ENCODE measurements at regions of chr2 and their contacts with region 1.

Region 1: GRCh38 chr2:135637456-135638087 is 104.1 kb upstream of the UBXN4 start:
- DNase-seq: peak; percentile 7
- ATAC-seq: peak; percentile 85
- H3K4me3 Mint-ChIP-seq: no peak overlapping the region
- H3K27ac Mint-ChIP-seq: peak overlapping the region; percentile 49
- H3K4me1 Mint-ChIP-seq: peaks cover 11% of the 10 kb centered on the region
- H3K27me3 Mint-ChIP-seq: no peaks in the 10 kb centered on the region

Region 2: GRCh38 chr2:135349941-135350340 is 287.6 kb before region 1 on chr2:
- CTCF ChIA-PET with region 1: no interaction called
- POLR2A ChIA-PET with region 1: no interaction called
- intact Hi-C with region 1: no loop called
- DNase-seq: no peak
- ATAC-seq: no peak
- H3K4me3 Mint-ChIP-seq: no peak overlapping the region
- H3K27ac Mint-ChIP-seq: no peak overlapping the region
- H3K4me1 Mint-ChIP-seq: no peaks in the 10 kb centered on the region
- H3K27me3 Mint-ChIP-seq: no peaks in the 10 kb centered on the region

Region 3: DNA sequence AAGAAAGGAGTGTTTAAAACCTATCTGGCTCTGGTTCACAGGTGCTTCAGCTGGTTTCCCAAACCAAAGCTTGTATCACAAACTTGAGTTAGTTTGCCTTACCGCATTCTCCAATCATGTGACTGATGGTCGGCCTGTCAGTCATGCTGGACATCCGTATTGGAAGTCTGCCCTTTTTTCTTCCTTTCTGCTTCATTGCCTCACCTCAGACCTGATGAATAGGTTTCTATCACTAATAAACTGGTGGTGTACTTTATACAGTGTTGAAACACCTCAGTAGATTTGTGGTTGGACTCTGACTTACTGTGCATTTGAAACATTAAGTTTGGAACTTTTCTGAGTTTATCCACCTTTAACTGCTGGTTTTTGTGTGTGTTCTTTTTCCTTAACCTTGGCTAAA is 22.2 kb before region 1 on chr2:
- CTCF ChIA-PET with region 1: interaction called, 4 read pairs
- POLR2A ChIA-PET with region 1: no interaction called
- intact Hi-C with region 1: loop called in 1 of 2 experiments (anchors 1 kb)
- DNase-seq: no peak
- ATAC-seq: no peak
- H3K4me3 Mint-ChIP-seq: no peak overlapping the region
- H3K27ac Mint-ChIP-seq: no peak overlapping the region
- H3K4me1 Mint-ChIP-seq: peaks cover 8% of the 10 kb centered on the region
- H3K27me3 Mint-ChIP-seq: no peaks in the 10 kb centered on the region

Region 4: GRCh38 chr2:135701442-135701841 is 63.9 kb after region 1 on chr2:
- CTCF ChIA-PET with region 1: no interaction called
- POLR2A ChIA-PET with region 1: no interaction called
- intact Hi-C with region 1: no loop called
- DNase-seq: no peak
- ATAC-seq: peak; percentile 77
- H3K4me3 Mint-ChIP-seq: no peak overlapping the region
- H3K27ac Mint-ChIP-seq: no peak overlapping the region
- H3K4me1 Mint-ChIP-seq: no peaks in the 10 kb centered on the region
- H3K27me3 Mint-ChIP-seq: no peaks in the 10 kb centered on the region

Region 5: GRCh38 chr2:136185981-136186776 is 548.6 kb after region 1 on chr2:
- CTCF ChIA-PET with region 1: no interaction called
- POLR2A ChIA-PET with region 1: no interaction called
- intact Hi-C with region 1: no loop called
- DNase-seq: peak; percentile 30
- ATAC-seq: peak; percentile 42
- H3K4me3 Mint-ChIP-seq: no peak overlapping the region
- H3K27ac Mint-ChIP-seq: no peak overlapping the region
- H3K4me1 Mint-ChIP-seq: no peaks in the 10 kb centered on the region
- H3K27me3 Mint-ChIP-seq: no peaks in the 10 kb centered on the region